ENCODE measurements at regions of chr2 and their contacts with region 1.

Region 1: DNA sequence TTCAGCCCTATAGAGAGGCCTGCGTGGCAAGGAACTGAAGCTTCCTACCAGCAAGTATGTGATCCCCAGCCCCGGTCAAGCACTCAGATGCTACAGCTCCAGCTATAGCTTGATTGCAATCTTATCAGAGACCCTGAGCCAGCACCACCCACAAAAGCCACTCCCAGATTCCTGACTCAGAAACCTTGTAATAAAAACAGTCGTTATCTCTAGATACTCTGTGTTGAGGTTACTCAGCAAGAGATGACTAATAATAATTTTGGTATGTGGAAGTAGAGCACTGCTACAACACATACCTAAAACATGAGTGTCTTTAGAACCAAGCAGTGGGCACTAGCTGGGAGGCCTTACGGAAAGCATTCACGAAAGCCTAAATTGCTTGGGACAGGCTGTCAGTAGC is 216.9 kb downstream of the UXS1 start:
- DNase-seq: no peak
- H3K4me3 ChIP-seq: no peak overlapping the region
- H3K27ac ChIP-seq: no peak overlapping the region
- H3K4me1 ChIP-seq: no peaks in the 10 kb centered on the region
- H3K27me3 ChIP-seq: no peaks in the 10 kb centered on the region
- CTCF ChIP-seq: no peak
- POLR2A ChIP-seq: no peak

Region 2: DNA sequence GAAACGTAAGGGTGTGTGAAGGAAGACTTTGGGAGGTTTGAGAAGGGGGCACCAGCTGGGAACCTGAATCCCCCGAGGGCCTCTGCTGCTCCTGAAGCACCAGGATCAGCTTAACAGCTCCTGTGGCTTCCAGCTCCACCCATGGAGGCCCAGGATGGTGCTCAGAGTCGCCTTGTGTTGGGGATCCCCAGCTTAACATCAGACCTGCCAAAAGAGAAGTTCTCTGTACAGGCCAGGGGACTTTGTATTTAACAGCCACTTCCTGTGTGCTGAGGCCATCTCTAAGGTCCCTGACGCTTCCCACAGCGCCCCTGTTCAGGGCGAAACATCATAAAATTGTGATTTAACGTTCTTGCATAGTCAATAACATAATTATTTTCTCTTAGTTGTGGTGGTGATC is 155.0 kb before region 1 on chr2:
- CTCF ChIA-PET with region 1: no interaction called
- POLR2A ChIA-PET with region 1: no interaction called
- dilution Hi-C with region 1: no loop called
- intact Hi-C with region 1: no loop called
- DNase-seq: no peak
- H3K4me3 ChIP-seq: no peak overlapping the region
- H3K27ac ChIP-seq: no peak overlapping the region
- H3K4me1 ChIP-seq: no peaks in the 10 kb centered on the region
- H3K27me3 ChIP-seq: no peaks in the 10 kb centered on the region
- CTCF ChIP-seq: no peak
- POLR2A ChIP-seq: no peak

Region 3: GRCh38 chr2:105954891-105955290 is 22.3 kb before region 1 on chr2:
- CTCF ChIA-PET with region 1: no interaction called
- POLR2A ChIA-PET with region 1: no interaction called
- dilution Hi-C with region 1: no loop called
- intact Hi-C with region 1: loop called (anchors 1 kb)
- DNase-seq: no peak
- H3K4me3 ChIP-seq: no peak overlapping the region
- H3K27ac ChIP-seq: no peak overlapping the region
- H3K4me1 ChIP-seq: no peaks in the 10 kb centered on the region
- H3K27me3 ChIP-seq: no peaks in the 10 kb centered on the region
- CTCF ChIP-seq: no peak
- POLR2A ChIP-seq: no peak

Measured in endothelial cell of umbilical vein (primary cell).